T-cell (primary cell): ENCODE measurements at regions of chr11 and their contacts with region 1.

Region 1: DNA sequence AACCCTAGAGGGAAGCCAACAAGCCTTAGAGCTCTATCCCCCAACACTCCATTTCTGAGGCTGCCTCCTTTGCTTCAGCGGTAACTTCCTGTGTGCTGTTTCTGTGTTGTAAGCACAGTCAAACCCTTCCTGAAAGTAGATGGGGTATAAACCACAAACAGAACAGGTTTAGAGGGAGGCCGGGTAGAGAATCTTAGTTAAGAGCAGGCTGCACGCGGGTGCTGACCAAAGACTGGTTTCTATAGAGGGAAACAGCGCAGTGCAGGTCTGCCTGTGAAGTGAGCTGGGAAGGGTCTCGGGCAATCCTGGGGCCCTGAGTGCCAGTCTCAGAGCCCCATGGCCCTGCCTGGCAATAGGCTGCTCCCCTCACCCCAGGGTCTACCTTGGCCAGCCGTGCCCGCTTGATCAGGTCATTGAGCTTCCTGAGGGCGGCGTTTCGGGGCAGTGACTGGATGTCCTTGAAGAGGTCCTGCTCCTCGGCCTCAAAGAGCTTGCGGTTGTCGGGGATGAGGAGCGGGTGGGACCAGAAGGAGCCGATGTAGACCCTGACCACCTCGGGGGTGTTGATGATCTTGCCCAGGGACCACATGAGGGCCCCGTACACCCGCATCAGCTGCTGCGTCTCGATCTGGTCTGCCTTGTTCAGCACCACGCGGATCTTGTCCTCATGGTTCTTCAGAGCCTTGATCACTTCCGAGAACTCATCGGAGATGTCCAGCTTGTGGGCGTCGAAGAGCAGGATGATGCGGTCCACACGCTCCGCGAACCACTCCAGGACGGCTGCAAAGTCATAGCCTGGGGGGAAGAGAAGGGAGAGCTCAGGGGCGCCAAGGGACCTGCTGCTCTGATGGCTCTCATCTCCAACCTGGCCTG is 15.3 kb upstream of the CDC42BPG start:
- DNase-seq: peak in 29 of 35 experiments; percentile 38 to 86 (median 54)
- ATAC-seq: peak; percentile 78 to 81 (median 78)
- H3K4me3 ChIP-seq: peak overlapping the region; percentile 34 to 35
- H3K4me3 Mint-ChIP-seq: peak overlapping the region; percentile 70 to 82 (median 78)
- H3K27ac ChIP-seq: peak overlapping the region; percentile 93
- H3K27ac Mint-ChIP-seq: peak overlapping the region; percentile 97 to 99
- H3K4me1 ChIP-seq: peaks cover 81 to 100% of the 10 kb centered on the region in 2 experiments
- H3K4me1 Mint-ChIP-seq: peaks cover 86 to 94% (median 90%) of the 10 kb centered on the region in 3 donors
- H3K27me3 ChIP-seq: no peaks in the 10 kb centered on the region
- H3K27me3 Mint-ChIP-seq: no peaks in the 10 kb centered on the region

Region 2: DNA sequence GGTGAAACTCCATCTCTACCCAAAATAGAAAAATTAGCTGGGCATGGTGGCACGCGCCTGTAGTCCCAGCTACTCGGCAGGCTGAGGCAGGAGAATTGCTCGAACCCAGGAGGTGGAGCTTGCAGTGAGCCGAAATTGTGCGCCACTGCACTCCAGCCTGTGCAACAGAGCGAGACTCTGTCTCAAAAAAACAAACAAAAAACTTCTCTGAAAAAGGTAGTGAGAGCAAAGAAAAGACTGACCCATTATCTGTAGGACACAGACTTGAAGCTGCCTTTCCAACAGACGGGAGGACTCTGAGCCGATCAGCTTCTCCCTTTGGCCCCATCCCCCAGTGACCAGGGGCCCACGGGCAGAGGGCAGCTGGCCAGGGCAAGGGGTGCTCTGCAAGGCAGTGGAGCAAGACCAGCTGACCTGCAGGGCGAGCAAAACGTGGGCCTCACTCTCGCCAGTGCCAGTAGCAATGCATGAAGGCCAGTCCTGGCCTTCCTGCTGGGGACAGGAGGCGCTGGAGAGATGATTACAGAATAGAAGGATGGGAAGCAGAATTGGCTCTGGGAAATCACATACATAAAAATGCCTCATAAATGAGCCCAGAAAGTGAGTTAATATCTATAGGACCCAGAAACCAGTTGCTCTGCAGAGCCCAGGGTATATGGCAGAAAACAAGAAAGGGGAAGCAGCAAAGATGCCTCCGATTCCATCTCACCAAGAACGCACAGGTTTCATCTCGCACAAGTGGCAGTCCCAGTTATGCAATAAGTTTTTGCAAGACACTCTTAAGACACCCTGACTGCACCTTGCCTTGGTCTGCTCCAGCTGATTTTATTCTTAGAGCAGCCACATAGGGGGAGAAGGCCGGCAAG is 15.8 kb after region 1 on chr11:
- CTCF ChIA-PET with region 1: interaction called, 3 to 9 read pairs
- POLR2A ChIA-PET with region 1: interaction called, 4 to 24 read pairs
- DNase-seq: no peak
- ATAC-seq: no peak
- H3K4me3 ChIP-seq: peak overlapping the region; percentile 95 to 99
- H3K4me3 Mint-ChIP-seq: peak overlapping the region; percentile 99
- H3K27ac ChIP-seq: no peak overlapping the region
- H3K27ac Mint-ChIP-seq: peak overlapping the region; percentile 92 to 97
- H3K4me1 ChIP-seq: peaks cover 48 to 85% of the 10 kb centered on the region in 2 experiments
- H3K4me1 Mint-ChIP-seq: peaks cover 71 to 79% (median 76%) of the 10 kb centered on the region in 3 donors
- H3K27me3 ChIP-seq: no peaks in the 10 kb centered on the region
- H3K27me3 Mint-ChIP-seq: no peaks in the 10 kb centered on the region